MCF 10A (cell line): ENCODE measurements at regions of chr1 and their contacts with region 1.

Region 1: DNA sequence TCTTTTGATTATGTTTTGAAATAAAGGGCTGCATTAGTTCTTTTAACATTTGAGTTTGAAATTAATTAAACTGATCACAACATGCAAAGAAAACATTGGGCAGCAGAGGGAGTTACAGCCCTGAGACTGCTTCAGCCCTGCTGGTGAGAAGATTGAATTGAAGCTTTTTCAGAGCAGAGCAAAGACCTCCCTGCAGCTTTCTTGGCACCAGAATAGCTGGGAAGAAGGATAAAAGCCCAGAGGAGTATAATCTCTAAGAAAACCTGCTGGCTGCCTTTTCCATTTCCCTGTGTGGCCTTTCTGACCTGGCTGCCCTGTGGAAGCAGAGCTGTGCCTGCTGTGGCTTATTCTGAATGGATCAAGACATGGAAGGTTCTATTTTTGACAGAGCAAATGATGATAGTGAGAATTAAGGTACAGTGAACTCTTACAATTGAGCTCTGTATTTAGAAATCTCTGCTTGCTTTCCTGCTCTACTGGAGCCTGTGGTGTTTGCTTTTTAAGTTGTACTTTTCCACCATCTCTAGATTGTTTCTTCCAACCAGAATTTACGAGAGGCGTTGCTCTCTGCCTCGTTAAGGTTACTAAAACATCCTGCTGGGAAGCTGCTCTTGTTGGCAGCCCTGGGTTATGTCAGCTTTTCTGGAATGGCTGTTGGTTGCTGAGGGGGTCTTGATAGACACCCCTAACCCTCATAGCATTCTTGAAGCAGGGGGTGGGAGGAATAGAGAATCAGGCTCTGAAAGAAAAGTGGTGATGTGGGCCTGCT is 9.9 kb downstream of the SNRPE start:
- DNase-seq: peak; percentile 86
- H3K4me3 Mint-ChIP-seq: no peak overlapping the region
- H3K27ac Mint-ChIP-seq: peak overlapping the region; percentile 74
- H3K4me1 Mint-ChIP-seq: peaks cover 3% of the 10 kb centered on the region
- H3K27me3 Mint-ChIP-seq: no peaks in the 10 kb centered on the region
- CTCF ChIP-seq: peak; percentile 100

Region 2: GRCh38 chr1:203888807-203889251 is 17.5 kb after region 1 on chr1:
- CTCF ChIA-PET with region 1: interaction called, 38 read pairs
- POLR2A ChIA-PET with region 1: interaction called, 8 read pairs
- intact Hi-C with region 1: no loop called
- DNase-seq: peak; percentile 77
- H3K4me3 Mint-ChIP-seq: peak overlapping the region; percentile 11
- H3K27ac Mint-ChIP-seq: peak overlapping the region; percentile 98
- H3K4me1 Mint-ChIP-seq: peaks cover 27% of the 10 kb centered on the region
- H3K27me3 Mint-ChIP-seq: no peaks in the 10 kb centered on the region
- CTCF ChIP-seq: no peak

Region 3: DNA sequence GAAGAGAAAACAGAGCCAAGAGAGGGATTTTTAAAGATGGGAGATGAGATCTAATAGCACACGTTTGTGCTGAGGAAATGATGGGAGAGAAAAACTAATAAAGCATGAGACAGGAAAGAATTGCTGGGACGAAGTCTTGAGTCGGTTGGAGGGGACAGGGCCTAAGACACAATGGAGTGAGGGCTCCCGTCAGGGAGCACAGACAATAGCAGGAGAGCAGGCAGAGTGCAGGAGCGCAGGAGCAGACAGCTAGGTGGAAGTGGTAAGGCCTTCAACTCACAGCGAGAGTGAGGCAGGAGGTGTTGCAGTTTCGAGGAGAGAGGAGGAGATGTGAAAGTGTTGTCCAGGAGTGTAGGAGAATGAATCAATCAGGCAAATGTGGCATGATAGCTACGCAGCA is 141.8 kb after region 1 on chr1:
- CTCF ChIA-PET with region 1: no interaction called
- POLR2A ChIA-PET with region 1: no interaction called
- intact Hi-C with region 1: no loop called
- DNase-seq: no peak
- H3K4me3 Mint-ChIP-seq: no peak overlapping the region
- H3K27ac Mint-ChIP-seq: no peak overlapping the region
- H3K4me1 Mint-ChIP-seq: no peaks in the 10 kb centered on the region
- H3K27me3 Mint-ChIP-seq: no peaks in the 10 kb centered on the region
- CTCF ChIP-seq: no peak

Region 4: GRCh38 chr1:204059970-204060369 is 188.7 kb after region 1 on chr1:
- CTCF ChIA-PET with region 1: interaction called, 28 read pairs
- POLR2A ChIA-PET with region 1: interaction called, 3 read pairs
- intact Hi-C with region 1: loop called (anchors 1 kb)
- DNase-seq: no peak
- H3K4me3 Mint-ChIP-seq: no peak overlapping the region
- H3K27ac Mint-ChIP-seq: no peak overlapping the region
- H3K4me1 Mint-ChIP-seq: peaks cover 21% of the 10 kb centered on the region
- H3K27me3 Mint-ChIP-seq: no peaks in the 10 kb centered on the region
- CTCF ChIP-seq: no peak

Region 5: DNA sequence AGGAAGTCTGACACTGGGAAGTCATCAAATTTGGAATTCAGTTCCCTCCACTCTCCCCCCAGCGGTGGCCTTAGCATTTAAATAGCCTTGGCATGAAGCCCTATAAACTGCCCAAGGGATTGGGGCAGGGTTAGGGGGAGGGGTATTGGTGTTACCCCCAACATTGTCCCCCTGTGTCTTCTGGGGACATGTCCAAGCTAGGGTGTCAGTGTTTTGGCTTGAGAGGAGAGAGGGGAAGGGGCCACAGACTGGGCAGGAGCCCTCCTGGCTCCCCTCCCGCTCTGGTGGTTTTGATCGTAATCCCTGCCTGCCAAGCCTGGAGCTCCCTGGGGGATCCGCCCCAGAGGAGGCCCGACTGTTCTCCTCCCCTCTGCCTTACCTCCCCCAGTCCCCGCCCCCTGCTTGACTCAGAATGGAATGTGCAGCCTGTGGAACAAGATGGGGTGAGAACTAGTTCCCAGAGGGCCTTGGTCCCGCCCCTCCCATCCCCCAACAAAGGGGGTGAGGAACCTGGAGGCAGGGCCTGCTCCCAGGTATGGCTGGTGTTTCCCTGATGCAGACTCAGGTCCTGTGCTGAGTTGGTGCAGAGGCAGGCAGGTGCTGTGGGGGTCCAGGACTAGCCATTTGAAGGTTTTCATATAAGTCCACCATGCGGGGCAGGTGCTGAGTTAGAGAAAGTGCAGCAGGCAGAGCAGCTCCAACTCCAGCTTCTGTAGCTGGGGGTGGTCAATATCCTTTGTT is 209.0 kb after region 1 on chr1:
- CTCF ChIA-PET with region 1: interaction called, 33 read pairs
- POLR2A ChIA-PET with region 1: interaction called, 60 read pairs
- intact Hi-C with region 1: no loop called
- DNase-seq: peak; percentile 99
- H3K4me3 Mint-ChIP-seq: peak overlapping the region; percentile 19
- H3K27ac Mint-ChIP-seq: peak overlapping the region; percentile 4
- H3K4me1 Mint-ChIP-seq: peaks cover 51% of the 10 kb centered on the region
- H3K27me3 Mint-ChIP-seq: no peaks in the 10 kb centered on the region
- CTCF ChIP-seq: no peak

Region 6: GRCh38 chr1:204123376-204123775 is 252.1 kb after region 1 on chr1:
- CTCF ChIA-PET with region 1: interaction called, 452 read pairs
- POLR2A ChIA-PET with region 1: interaction called, 174 read pairs
- intact Hi-C with region 1: loop called (anchors 1 kb)
- DNase-seq: no peak
- H3K4me3 Mint-ChIP-seq: no peak overlapping the region
- H3K27ac Mint-ChIP-seq: no peak overlapping the region
- H3K4me1 Mint-ChIP-seq: peaks cover 16% of the 10 kb centered on the region
- H3K27me3 Mint-ChIP-seq: no peaks in the 10 kb centered on the region
- CTCF ChIP-seq: peak; percentile 54

Region 7: DNA sequence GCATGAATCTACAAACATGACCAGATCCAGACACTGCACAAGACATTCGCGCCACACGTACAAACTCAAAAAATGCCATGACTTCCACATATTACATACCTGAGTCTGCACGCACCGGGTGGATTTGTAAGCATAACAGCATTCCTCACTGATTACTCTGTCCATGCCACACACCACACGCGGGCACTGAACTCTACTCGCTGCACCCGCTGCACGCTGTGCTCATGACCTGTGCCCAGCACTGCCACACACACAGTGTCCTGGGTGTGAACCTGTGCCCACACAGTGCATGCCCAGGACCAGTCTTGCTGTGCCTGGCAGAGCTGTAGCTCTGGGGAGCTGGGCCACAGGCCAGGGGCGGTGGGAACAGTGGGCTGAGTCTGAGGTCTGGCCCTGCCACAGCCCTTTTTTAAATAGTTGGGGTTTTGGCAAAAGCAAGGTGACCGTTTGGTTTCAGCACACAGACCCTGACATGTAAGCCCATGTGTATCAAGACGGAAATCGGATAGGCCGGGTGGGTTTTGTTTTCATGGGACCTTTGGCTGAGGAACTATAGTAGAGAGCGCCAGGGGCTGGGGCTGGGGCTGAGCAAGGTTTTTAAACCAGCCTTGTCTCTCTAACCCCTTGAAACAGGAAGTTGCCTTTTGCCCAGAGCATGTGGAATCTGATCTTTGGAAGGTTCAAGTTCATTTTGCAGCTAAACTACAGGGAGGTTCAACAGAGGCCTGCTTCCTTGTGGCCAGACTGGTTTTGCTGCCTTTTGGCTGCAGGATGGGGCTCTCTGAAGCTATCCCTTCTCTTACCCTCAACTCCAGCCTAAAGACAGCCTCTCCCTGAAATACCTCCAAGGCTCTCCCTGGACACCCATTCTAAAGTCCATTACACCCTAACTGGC is 354.8 kb after region 1 on chr1:
- CTCF ChIA-PET with region 1: no interaction called
- POLR2A ChIA-PET with region 1: no interaction called
- intact Hi-C with region 1: no loop called
- DNase-seq: peak; percentile 34
- H3K4me3 Mint-ChIP-seq: no peak overlapping the region
- H3K27ac Mint-ChIP-seq: peak overlapping the region; percentile 1
- H3K4me1 Mint-ChIP-seq: peaks cover 18% of the 10 kb centered on the region
- H3K27me3 Mint-ChIP-seq: no peaks in the 10 kb centered on the region
- CTCF ChIP-seq: no peak